Activated CD8-positive, alpha-beta T cell treated with anti-CD3 and anti-CD28 coated beads, Interleukin-2, amount 10 ng/mL, durations not matched to agents 7 days and 5 days (primary cell): ENCODE measurements at regions of chr1 and their contacts with region 1.

Region 1: GRCh38 chr1:66725885-66726665 is 26.2 kb upstream of the DYNLT5 start:
- DNase-seq: peak; percentile 68
- ATAC-seq: peak; percentile 75
- H3K4me3 Mint-ChIP-seq: no peak overlapping the region
- H3K27ac Mint-ChIP-seq: no peak overlapping the region
- H3K4me1 Mint-ChIP-seq: peaks cover 14% of the 10 kb centered on the region
- H3K27me3 Mint-ChIP-seq: peaks cover 17% of the 10 kb centered on the region

Region 2: GRCh38 chr1:66739401-66740157 is 13.5 kb after region 1 on chr1:
- CTCF ChIA-PET with region 1: interaction called, 13 read pairs
- POLR2A ChIA-PET with region 1: no interaction called
- DNase-seq: no peak
- ATAC-seq: no peak
- H3K4me3 Mint-ChIP-seq: no peak overlapping the region
- H3K27ac Mint-ChIP-seq: peak overlapping the region; percentile 26
- H3K4me1 Mint-ChIP-seq: peaks cover 9% of the 10 kb centered on the region
- H3K27me3 Mint-ChIP-seq: peaks cover 4% of the 10 kb centered on the region

Region 3: GRCh38 chr1:66867501-66867900 is 141.4 kb after region 1 on chr1:
- CTCF ChIA-PET with region 1: no interaction called
- POLR2A ChIA-PET with region 1: no interaction called
- DNase-seq: no peak
- ATAC-seq: no peak
- H3K4me3 Mint-ChIP-seq: no peak overlapping the region
- H3K27ac Mint-ChIP-seq: no peak overlapping the region
- H3K4me1 Mint-ChIP-seq: no peaks in the 10 kb centered on the region
- H3K27me3 Mint-ChIP-seq: no peaks in the 10 kb centered on the region